Activated T-helper 1 cell treated with anti-CD3 and anti-CD28 coated beads, Interleukin-12 subunit alpha, Interleukin-12 subunit beta, Interleukin-2, Interleukin-4 antibody, amounts not matched to agents 30 ng/mL and 10 ng/mL and 1 ng/mL, durations not matched to agents 14 hours and 24 hours and 36 hours (primary cell): ENCODE measurements at regions of chr1 and their contacts with region 1.

Region 1: GRCh38 chr1:26723013-26723991 is 27.5 kb downstream of the ARID1A start:
- DNase-seq: peak; percentile 25
- H3K4me3 Mint-ChIP-seq: peak overlapping the region; percentile 55
- H3K27ac Mint-ChIP-seq: peak overlapping the region; percentile 35
- H3K4me1 Mint-ChIP-seq: peaks cover 82% of the 10 kb centered on the region
- H3K27me3 Mint-ChIP-seq: no peaks in the 10 kb centered on the region

Region 2: DNA sequence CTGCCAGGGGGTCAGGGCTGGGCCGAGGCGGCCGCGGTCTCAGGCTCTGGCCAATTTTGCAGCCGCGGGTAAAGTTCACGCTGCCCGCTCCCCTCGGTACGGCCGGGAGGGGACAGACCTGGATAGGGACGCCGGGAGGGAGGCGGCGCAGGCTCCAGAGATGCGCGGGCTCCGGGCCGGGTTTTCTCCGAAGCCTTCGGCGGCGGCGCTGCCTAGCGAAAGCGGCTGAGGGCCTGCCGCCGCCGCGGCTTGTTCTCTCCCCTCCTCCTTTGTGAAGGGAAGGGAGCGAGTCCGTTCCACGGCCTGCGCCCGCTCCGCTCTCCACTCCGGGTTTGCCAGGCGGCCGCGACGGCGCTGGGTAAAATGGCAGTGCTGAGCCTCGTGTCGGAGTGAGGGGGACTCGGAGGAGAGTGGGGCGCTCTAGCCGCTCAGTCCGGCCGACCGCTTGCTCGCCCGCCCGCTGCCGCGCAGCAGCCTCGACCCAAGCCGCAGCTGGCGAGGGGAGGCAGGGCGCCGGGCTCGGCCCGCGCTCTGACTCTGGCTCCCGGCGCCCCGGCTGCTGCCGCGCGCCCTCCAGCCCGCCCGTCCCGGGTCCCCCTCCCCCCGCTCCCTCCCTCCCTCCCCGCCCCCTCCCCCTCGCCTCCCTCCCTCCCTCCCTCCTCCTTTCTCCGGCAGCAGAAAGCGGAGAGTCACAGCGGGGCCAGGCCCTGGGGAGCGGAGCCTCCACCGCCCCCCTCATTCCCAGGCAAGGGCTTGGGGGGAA is 27.8 kb before region 1 on chr1 and contains the start of gene ARID1A:
- intact Hi-C with region 1: loop called (anchors 1 kb)
- DNase-seq: peak; percentile 96
- H3K4me3 Mint-ChIP-seq: peak within 1 kb of the TSS; percentile 90
- H3K27ac Mint-ChIP-seq: peak within 1 kb of the TSS; percentile 96
- H3K4me1 Mint-ChIP-seq: peaks cover 31% of the 10 kb centered on the region
- H3K27me3 Mint-ChIP-seq: no peaks in the 10 kb centered on the region
- total RNA-seq, gene ARID1A: 130 and 132 TPM in 2 replicates

Region 3: DNA sequence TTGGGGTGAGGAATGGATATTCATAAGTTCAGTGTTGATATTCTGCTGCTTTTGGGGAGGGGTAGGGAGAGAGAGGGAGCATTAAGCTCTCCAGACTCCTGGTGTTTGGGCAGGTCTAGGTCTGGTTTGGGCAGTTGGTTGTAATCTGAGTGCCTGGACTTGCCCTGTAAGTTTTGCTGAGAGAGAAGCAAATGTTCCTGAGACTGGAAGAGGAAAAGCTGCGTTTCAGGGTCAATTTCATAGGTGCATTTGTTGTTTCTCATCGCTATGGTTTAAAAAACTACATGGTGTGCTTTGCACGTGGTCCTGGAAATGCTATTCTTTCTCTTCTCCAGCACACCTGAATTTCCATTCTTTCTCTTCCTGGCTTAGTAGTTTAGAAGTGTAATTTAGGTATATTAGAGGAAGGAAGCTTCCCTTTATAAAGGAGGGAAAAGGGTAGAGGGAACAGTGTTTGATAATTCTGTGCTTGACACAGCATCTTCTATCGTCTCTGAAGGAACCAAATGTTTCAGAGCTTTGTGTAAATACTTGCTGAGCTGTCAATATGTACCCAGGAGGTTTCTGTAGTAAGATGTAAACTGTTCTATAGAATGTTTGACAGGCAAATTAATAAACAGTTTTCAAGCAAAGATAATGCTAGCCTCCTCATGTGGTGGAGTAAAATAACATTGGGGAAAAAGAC is 21.2 kb before region 1 on chr1:
- intact Hi-C with region 1: loop called (anchors 1 kb)
- DNase-seq: no peak
- H3K4me3 Mint-ChIP-seq: no peak overlapping the region
- H3K27ac Mint-ChIP-seq: no peak overlapping the region
- H3K4me1 Mint-ChIP-seq: peaks cover 23% of the 10 kb centered on the region
- H3K27me3 Mint-ChIP-seq: no peaks in the 10 kb centered on the region

Region 4: DNA sequence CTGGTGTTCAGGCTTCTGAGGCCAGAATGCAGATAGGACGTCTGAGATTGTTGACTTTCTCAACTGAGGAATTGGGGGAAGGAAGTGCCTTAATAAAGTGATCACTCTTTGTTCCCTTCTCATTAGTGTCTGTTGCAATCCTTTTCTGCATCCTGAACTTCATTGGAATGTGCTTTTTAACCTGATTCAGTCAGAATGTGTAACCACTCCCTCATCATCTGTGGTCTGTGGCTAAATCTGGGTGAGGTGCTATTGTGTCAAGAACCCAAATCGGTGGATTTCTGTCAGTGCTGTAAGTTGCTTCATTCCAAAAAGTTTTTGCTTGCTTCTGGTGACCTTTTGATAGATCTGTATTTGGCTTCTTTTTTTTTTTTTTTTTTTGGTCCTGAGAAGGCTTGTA is 10.7 kb after region 1 on chr1:
- intact Hi-C with region 1: loop called (anchors 1 kb)
- DNase-seq: peak; percentile 24
- H3K4me3 Mint-ChIP-seq: peak overlapping the region; percentile 33
- H3K27ac Mint-ChIP-seq: peak overlapping the region; percentile 71
- H3K4me1 Mint-ChIP-seq: peaks cover 53% of the 10 kb centered on the region
- H3K27me3 Mint-ChIP-seq: no peaks in the 10 kb centered on the region